IMR-90 (cell line): ENCODE measurements at regions of chr10 and their contacts with region 1.

Region 1: DNA sequence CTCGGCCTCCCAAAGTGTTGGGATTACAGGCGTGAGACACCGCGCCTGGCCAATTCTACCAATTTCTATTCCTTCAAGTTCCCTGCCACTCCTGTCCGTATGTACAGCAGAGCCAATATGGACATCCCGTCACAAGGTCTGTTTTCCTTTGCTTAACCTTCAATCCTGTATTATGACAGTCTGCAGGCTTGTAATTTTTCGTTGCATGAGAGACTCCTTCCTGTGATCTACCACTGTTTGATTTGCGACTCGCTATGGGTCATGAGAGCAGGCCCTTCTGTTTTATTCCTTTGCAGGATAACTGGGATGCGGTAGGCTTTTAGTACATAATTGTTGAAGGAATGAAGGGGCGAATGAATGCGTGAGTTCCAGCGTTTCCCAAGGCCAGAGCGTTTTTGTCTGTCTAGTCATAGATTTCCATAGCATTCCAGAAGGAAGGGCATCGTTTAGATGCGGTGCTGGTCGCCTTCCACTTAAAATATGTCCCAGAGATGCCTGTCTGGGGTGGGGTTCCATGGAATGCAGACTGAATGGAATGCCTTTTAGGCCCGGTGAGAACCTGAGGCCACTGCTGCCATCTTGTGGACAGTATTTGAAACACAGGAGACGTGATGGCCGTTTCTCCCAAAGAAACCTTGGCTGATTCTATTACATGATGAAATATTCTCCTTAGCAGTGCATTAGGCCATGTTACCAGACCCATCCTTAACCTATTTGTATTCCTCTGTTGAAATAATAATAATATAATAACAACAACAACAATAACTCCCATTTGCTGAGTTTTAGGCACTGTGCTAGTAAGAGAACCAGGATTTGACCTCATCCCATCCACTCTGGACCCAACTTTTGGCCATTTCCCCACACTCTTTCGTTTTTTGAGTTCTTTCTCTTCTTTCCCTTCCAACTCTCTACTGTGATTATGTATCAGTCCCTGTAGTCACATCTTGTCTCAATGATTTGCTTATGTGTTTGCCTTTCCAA is 193.2 kb downstream of the MYOF start:
- DNase-seq: peak; percentile 84
- ATAC-seq: peak; percentile 95
- H3K4me3 ChIP-seq: no peak overlapping the region
- H3K27ac ChIP-seq: 0 out of 2 replicates have a peak overlapping the region, but pooled peaks have one; percentile 7
- H3K4me1 ChIP-seq: no peaks in the 10 kb centered on the region
- H3K27me3 ChIP-seq: no peaks in the 10 kb centered on the region
- CTCF ChIP-seq: peak; percentile 86
- POLR2A ChIP-seq: no peak
- RAD21 ChIP-seq: peak; percentile 85

Region 2: DNA sequence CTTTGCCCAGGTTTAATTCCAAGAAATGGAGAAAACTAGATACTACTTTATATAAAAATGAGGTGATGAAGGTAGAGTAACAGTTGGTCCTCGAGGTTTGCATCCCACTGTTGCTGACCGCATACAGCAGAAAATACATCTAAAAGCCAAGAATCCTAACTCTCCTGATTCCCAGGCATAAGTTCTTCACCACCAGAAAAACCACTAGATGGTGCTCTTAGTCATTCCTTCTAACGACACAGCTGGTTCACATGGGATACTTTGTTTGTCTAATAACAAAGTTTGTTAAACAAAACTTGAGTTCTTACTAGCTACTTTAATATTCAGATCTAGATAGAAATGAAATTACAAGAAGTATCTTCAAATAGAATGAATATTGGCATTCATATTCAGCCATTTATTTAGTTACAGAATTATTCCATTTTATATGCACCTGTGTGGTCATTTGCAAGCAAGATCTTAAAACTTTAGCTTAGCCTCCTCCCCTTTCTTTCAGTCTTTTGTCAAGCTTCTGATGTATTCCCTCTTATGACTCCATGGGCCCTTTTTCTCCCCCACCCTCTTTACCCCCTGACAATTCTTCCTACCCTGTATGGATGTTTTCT is 282.4 kb before region 1 on chr10:
- CTCF ChIA-PET with region 1: no interaction called
- POLR2A ChIA-PET with region 1: no interaction called
- dilution Hi-C with region 1: no loop called
- in situ Hi-C with region 1: no loop called
- intact Hi-C with region 1: loop called (anchors 1 kb)
- DNase-seq: peak; percentile 75
- ATAC-seq: peak; percentile 85
- H3K4me3 ChIP-seq: no peak overlapping the region
- H3K27ac ChIP-seq: no peak overlapping the region
- H3K4me1 ChIP-seq: peaks cover 2% of the 10 kb centered on the region; the same call in 1 of the 2 replicates
- H3K27me3 ChIP-seq: no peaks in the 10 kb centered on the region
- CTCF ChIP-seq: peak; percentile 71
- POLR2A ChIP-seq: no peak
- RAD21 ChIP-seq: peak; percentile 76

Region 3: GRCh38 chr10:93115661-93116383 is 173.1 kb before region 1 on chr10:
- CTCF ChIA-PET with region 1: interaction called, 3 read pairs
- POLR2A ChIA-PET with region 1: no interaction called
- dilution Hi-C with region 1: loop called (anchors 25 kb)
- in situ Hi-C with region 1: no loop called
- intact Hi-C with region 1: loop called (anchors 2 kb)
- DNase-seq: peak; percentile 32
- ATAC-seq: peak; percentile 51; the same call in 1 of the 2 replicates
- H3K4me3 ChIP-seq: no peak overlapping the region
- H3K27ac ChIP-seq: no peak overlapping the region
- H3K4me1 ChIP-seq: no peaks in the 10 kb centered on the region
- H3K27me3 ChIP-seq: peaks cover 24% of the 10 kb centered on the region
- CTCF ChIP-seq: peak; percentile 50
- POLR2A ChIP-seq: no peak
- RAD21 ChIP-seq: peak; percentile 29; the same call in 1 of the 2 replicates

Region 4: GRCh38 chr10:93180482-93180931 is 108.4 kb before region 1 on chr10:
- CTCF ChIA-PET with region 1: no interaction called
- POLR2A ChIA-PET with region 1: no interaction called
- dilution Hi-C with region 1: no loop called
- in situ Hi-C with region 1: no loop called
- intact Hi-C with region 1: no loop called
- DNase-seq: peak; percentile 7
- ATAC-seq: no peak
- H3K4me3 ChIP-seq: no peak overlapping the region
- H3K27ac ChIP-seq: no peak overlapping the region
- H3K4me1 ChIP-seq: no peaks in the 10 kb centered on the region
- H3K27me3 ChIP-seq: peaks cover 11% of the 10 kb centered on the region
- CTCF ChIP-seq: no peak
- POLR2A ChIP-seq: no peak
- RAD21 ChIP-seq: no peak

Region 5: GRCh38 chr10:93208716-93209464 is 80.1 kb before region 1 on chr10:
- CTCF ChIA-PET with region 1: no interaction called
- POLR2A ChIA-PET with region 1: no interaction called
- dilution Hi-C with region 1: no loop called
- in situ Hi-C with region 1: no loop called
- intact Hi-C with region 1: no loop called
- DNase-seq: peak; percentile 6
- ATAC-seq: no peak
- H3K4me3 ChIP-seq: no peak overlapping the region
- H3K27ac ChIP-seq: no peak overlapping the region
- H3K4me1 ChIP-seq: no peaks in the 10 kb centered on the region
- H3K27me3 ChIP-seq: peaks cover 19% of the 10 kb centered on the region
- CTCF ChIP-seq: no peak
- POLR2A ChIP-seq: no peak
- RAD21 ChIP-seq: no peak

Region 6: GRCh38 chr10:93219347-93219746 is 69.6 kb before region 1 on chr10:
- CTCF ChIA-PET with region 1: no interaction called
- POLR2A ChIA-PET with region 1: no interaction called
- dilution Hi-C with region 1: no loop called
- in situ Hi-C with region 1: no loop called
- intact Hi-C with region 1: loop called (anchors 2 kb)
- DNase-seq: peak; percentile 28
- ATAC-seq: peak; percentile 85
- H3K4me3 ChIP-seq: no peak overlapping the region
- H3K27ac ChIP-seq: no peak overlapping the region
- H3K4me1 ChIP-seq: no peaks in the 10 kb centered on the region
- H3K27me3 ChIP-seq: peaks cover 32% of the 10 kb centered on the region
- CTCF ChIP-seq: no peak
- POLR2A ChIP-seq: no peak
- RAD21 ChIP-seq: no peak